Activated CD4-positive, alpha-beta memory T cell treated with anti-CD3 and anti-CD28 coated beads for 36 hours (primary cell): ENCODE measurements at regions of chr14 and their contacts with region 1.

Region 1: DNA sequence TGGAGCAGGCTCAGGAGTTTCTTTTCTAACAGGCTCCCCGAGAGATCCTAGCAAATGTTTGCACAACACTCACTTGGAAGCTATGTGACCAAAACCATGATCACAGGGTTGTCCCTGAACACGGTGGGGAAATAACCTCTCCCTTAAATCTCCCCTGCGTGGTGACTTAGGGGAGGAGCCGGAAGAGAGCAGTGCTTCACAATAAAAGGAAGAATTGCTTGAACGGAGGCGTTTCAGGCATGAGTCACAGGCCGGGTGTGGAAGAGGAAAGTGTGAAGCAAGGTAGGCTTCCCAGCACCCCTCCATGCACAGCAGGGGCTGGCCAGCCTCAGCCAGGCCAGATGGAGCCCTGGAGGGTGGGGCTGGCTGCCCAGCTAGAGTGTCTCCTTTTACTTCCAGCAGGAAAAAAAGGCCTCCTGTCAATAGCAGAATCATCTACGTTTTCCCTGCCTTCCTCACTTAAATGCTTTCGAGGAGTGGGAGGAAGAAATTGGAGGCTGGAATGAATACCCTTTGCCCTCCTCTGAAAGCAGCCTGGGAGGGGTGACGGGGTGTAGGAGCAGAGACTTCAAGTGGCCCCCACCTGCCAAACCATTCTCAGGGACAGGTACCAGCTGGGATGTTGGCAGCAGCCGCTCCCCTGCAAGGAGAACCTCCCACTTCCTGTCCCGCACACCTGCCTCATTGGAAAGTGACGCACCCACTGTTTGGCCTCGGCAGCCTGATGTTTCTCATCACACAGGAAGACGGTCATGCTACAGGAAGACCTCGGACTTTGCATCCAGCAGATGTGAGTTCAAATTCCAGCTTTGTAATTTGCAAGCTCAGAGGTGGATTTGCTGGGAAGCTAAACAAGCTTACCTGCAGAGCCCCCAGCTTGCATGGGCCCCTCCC is 30.1 kb upstream of the PPP2R5C start:
- DNase-seq: peak; percentile 94
- H3K4me3 Mint-ChIP-seq: peak overlapping the region; percentile 74
- H3K27ac Mint-ChIP-seq: peak overlapping the region; percentile 97
- H3K4me1 Mint-ChIP-seq: peaks cover 61% of the 10 kb centered on the region
- H3K27me3 Mint-ChIP-seq: no peaks in the 10 kb centered on the region

Region 2: DNA sequence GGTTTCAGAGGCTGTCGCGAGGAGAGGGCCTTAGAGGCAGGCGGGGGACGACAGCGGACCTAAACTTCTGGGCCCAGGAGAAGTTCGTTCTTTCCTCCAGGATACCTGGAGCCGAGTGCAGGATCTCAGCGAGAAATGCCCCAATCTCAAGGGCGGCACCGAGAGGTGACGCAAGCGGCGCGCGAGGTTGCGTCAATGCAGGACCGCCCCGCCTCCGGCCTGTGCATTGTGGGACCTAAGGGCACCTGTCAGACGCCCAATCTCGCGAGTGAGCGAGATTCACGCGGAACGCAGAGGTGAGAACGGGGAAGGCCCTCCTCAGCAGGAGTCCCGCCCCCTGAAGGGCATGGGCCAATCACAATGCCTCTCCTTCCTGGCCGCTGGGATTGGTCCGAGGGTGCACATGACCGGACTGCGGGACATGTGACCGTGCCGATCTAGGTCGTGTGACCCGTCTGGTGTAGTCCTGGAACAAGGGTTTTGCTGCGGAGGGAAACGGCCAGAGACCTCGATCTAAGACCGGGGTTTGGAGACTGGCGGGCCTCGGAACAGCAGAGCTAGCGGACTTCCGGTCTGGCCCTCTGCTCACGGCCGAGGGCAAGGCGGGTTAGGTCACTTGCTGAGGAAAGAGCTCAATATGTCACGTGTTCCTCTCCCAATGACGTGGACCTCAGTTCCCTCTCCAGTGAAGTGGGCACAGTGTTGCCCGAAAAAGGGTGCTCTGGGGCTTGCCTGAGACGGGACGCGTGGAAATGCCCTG is 216.7 kb after region 1 on chr14:
- CTCF ChIA-PET with region 1: no interaction called
- POLR2A ChIA-PET with region 1: no interaction called
- intact Hi-C with region 1: loop called (anchors 1 kb)
- DNase-seq: peak; percentile 100
- H3K4me3 Mint-ChIP-seq: peak overlapping the region; percentile 92
- H3K27ac Mint-ChIP-seq: peak overlapping the region; percentile 95
- H3K4me1 Mint-ChIP-seq: peaks cover 15% of the 10 kb centered on the region
- H3K27me3 Mint-ChIP-seq: peaks cover 20% of the 10 kb centered on the region